ENCODE measurements at regions of chr1 and their contacts with region 1.

Region 1: GRCh38 chr1:180631766-180632325 is at the start of gene XPR1:
- DNase-seq: peak; percentile 99
- ATAC-seq: peak; percentile 94
- H3K4me3 ChIP-seq: peak within 1 kb of the TSS; percentile 66 to 97 (median 93)
- H3K4me3 Mint-ChIP-seq: peak within 1 kb of the TSS; percentile 49
- H3K27ac ChIP-seq: peak within 1 kb of the TSS; percentile 85 to 87
- H3K27ac Mint-ChIP-seq: no peak within 1 kb of the TSS
- H3K4me1 ChIP-seq: peaks cover 16 to 21% of the 10 kb centered on the region in 2 donors
- H3K4me1 Mint-ChIP-seq: peaks cover 19% of the 10 kb centered on the region
- H3K27me3 ChIP-seq: no peaks in the 10 kb centered on the region
- H3K27me3 Mint-ChIP-seq: peaks cover 5% of the 10 kb centered on the region
- CTCF ChIP-seq: no peak
- total RNA-seq, gene XPR1: 22.3 and 22.8 TPM in 2 replicates

Region 2: GRCh38 chr1:179293340-179294327 is 1338.2 kb before region 1 on chr1 and contains the start of gene SOAT1:
- CTCF ChIA-PET with region 1: no interaction called
- POLR2A ChIA-PET with region 1: no interaction called
- intact Hi-C with region 1: loop called (anchors 10 kb)
- DNase-seq: peak; percentile 93
- ATAC-seq: peak; percentile 99
- H3K4me3 ChIP-seq: peak within 1 kb of the TSS; percentile 89 to 99 (median 92)
- H3K4me3 Mint-ChIP-seq: peak within 1 kb of the TSS; percentile 93
- H3K27ac ChIP-seq: peak within 1 kb of the TSS; percentile 79 to 84
- H3K27ac Mint-ChIP-seq: peak within 1 kb of the TSS; percentile 82
- H3K4me1 ChIP-seq: peaks cover 27 to 39% of the 10 kb centered on the region in 2 donors
- H3K4me1 Mint-ChIP-seq: peaks cover 42% of the 10 kb centered on the region
- H3K27me3 ChIP-seq: no peaks in the 10 kb centered on the region
- H3K27me3 Mint-ChIP-seq: no peaks in the 10 kb centered on the region
- CTCF ChIP-seq: peak; percentile 31
- total RNA-seq, gene SOAT1: 25.1 and 27.1 TPM in 2 replicates

Region 3: GRCh38 chr1:180154325-180155181 is 477.3 kb before region 1 on chr1 and contains the start of gene QSOX1:
- CTCF ChIA-PET with region 1: no interaction called
- POLR2A ChIA-PET with region 1: no interaction called
- intact Hi-C with region 1: loop called (anchors 2 kb)
- DNase-seq: peak; percentile 91
- ATAC-seq: peak; percentile 96
- H3K4me3 ChIP-seq: peak within 1 kb of the TSS; percentile 58 to 89 (median 84)
- H3K4me3 Mint-ChIP-seq: peak within 1 kb of the TSS; percentile 96
- H3K27ac ChIP-seq: peak within 1 kb of the TSS; percentile 21 to 65
- H3K27ac Mint-ChIP-seq: peak within 1 kb of the TSS; percentile 86
- H3K4me1 ChIP-seq: peaks cover 22 to 25% of the 10 kb centered on the region in 2 donors
- H3K4me1 Mint-ChIP-seq: peaks cover 26% of the 10 kb centered on the region
- H3K27me3 ChIP-seq: no peaks in the 10 kb centered on the region
- H3K27me3 Mint-ChIP-seq: no peaks in the 10 kb centered on the region
- CTCF ChIP-seq: peak; percentile 9
- total RNA-seq, gene QSOX1: 16.9 and 20.6 TPM in 2 replicates

Region 4: GRCh38 chr1:180617774-180618395 is 14.0 kb before region 1 on chr1:
- CTCF ChIA-PET with region 1: no interaction called
- POLR2A ChIA-PET with region 1: no interaction called
- intact Hi-C with region 1: no loop called
- DNase-seq: no peak
- ATAC-seq: no peak
- H3K4me3 ChIP-seq: no peak overlapping the region
- H3K4me3 Mint-ChIP-seq: no peak overlapping the region
- H3K27ac ChIP-seq: no peak overlapping the region
- H3K27ac Mint-ChIP-seq: no peak overlapping the region
- H3K4me1 ChIP-seq: peaks cover 0 to 4% of the 10 kb centered on the region in 2 donors
- H3K4me1 Mint-ChIP-seq: no peaks in the 10 kb centered on the region
- H3K27me3 ChIP-seq: no peaks in the 10 kb centered on the region
- H3K27me3 Mint-ChIP-seq: no peaks in the 10 kb centered on the region
- CTCF ChIP-seq: no peak

Region 5: GRCh38 chr1:180851995-180852887 is 220.4 kb after region 1 on chr1:
- CTCF ChIA-PET with region 1: no interaction called
- POLR2A ChIA-PET with region 1: no interaction called
- intact Hi-C with region 1: loop called (anchors 10 kb)
- DNase-seq: peak; percentile 13
- ATAC-seq: peak; percentile 56
- H3K4me3 ChIP-seq: no peak overlapping the region
- H3K4me3 Mint-ChIP-seq: peak overlapping the region; percentile 6
- H3K27ac ChIP-seq: no peak overlapping the region
- H3K27ac Mint-ChIP-seq: no peak overlapping the region
- H3K4me1 ChIP-seq: peaks cover 9 to 10% of the 10 kb centered on the region in 2 donors
- H3K4me1 Mint-ChIP-seq: peaks cover 20% of the 10 kb centered on the region
- H3K27me3 ChIP-seq: no peaks in the 10 kb centered on the region
- H3K27me3 Mint-ChIP-seq: no peaks in the 10 kb centered on the region
- CTCF ChIP-seq: no peak

Region 6: DNA sequence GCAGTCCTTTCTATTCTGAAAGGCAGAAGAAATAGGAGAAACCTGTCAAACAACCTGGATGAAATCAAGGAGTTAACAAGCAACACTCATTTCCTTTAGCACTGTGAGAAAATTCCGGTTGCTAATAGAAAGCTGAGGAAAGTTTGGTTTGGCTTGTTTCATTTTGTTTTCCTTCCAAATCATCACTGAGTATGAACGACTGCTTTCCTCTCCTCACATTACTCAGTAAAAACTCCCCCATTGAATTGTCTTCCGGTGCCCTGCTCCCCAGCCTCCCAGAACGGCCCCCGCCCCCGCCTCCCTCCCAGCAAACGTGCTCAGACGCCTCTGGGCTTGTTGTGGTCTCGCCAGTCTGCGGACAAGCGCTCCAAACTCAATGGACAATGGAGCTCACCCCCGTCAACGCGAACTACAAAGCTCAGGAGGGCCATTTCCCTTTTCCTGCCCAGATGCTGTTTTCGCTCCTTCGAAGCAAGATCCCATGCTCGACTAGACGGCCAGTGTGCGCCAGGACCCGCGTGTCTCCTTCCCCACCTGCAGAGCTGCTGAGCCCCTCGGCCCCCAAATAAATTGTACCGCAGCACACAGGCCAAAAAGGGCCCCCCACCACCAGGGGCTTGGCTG is 390.1 kb after region 1 on chr1:
- CTCF ChIA-PET with region 1: no interaction called
- POLR2A ChIA-PET with region 1: no interaction called
- intact Hi-C with region 1: loop called (anchors 1 kb)
- DNase-seq: peak; percentile 71
- ATAC-seq: peak; percentile 4
- H3K4me3 ChIP-seq: peak overlapping the region; percentile 79 to 95 (median 88)
- H3K4me3 Mint-ChIP-seq: peak overlapping the region; percentile 93
- H3K27ac ChIP-seq: peak overlapping the region; percentile 54 to 82
- H3K27ac Mint-ChIP-seq: peak overlapping the region; percentile 98
- H3K4me1 ChIP-seq: peaks cover 24 to 29% of the 10 kb centered on the region in 2 donors
- H3K4me1 Mint-ChIP-seq: peaks cover 41% of the 10 kb centered on the region
- H3K27me3 ChIP-seq: no peaks in the 10 kb centered on the region
- H3K27me3 Mint-ChIP-seq: no peaks in the 10 kb centered on the region
- CTCF ChIP-seq: no peak

Region 7: DNA sequence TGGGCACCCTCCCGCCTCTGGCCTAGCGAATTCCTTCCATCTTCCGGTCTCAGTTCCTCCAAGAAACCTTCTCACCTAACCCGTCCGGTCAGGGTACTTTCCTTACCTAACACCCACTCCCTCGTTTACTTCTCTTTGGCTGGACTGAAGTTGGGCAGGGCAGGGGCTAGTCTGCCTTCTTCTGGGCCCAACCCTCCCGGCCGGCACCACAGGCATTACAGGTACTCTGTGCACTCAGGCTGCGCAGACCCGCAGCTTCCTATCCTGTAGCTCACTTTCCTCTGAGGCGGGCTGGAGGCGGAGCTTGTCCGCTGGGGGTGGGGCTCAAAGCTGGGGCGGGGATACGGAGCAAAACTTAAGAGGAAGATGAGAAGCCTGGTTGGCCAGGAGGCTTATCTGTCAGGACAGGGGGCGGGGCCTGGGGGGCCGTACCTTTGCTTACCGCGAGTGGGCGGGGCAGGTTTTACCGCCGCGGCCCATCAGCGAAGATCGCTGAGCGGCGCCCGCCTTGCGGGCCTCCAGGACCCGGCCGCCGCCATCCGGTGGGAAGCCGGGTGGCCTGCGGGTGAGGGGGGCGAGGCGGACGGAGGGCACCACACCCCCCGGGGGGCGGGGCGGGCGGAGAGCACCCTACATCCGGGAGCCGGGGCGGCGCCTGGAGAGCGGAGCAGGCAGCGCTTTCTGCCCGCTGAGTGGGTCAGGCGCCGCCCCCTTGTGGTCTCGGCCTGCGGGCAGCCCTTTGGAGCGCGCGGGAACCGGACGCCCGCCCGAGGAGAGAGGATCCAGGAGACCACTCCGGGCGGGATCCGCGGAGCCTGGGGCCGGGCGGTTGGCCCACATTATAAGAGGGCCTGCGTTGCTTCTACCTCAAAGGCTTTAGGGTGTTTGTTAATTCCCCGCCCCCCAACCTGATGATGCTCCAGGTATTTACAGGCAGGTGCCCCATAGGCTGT is 1397.8 kb after region 1 on chr1:
- CTCF ChIA-PET with region 1: no interaction called
- POLR2A ChIA-PET with region 1: no interaction called
- intact Hi-C with region 1: loop called (anchors 5 kb)
- DNase-seq: peak; percentile 98
- ATAC-seq: peak; percentile 92
- H3K4me3 ChIP-seq: peak overlapping the region; percentile 50 to 84 (median 72)
- H3K4me3 Mint-ChIP-seq: peak overlapping the region; percentile 92
- H3K27ac ChIP-seq: peak overlapping the region; percentile 60 to 71
- H3K27ac Mint-ChIP-seq: peak overlapping the region; percentile 94
- H3K4me1 ChIP-seq: peaks cover 9 to 12% of the 10 kb centered on the region in 2 donors
- H3K4me1 Mint-ChIP-seq: peaks cover 15% of the 10 kb centered on the region
- H3K27me3 ChIP-seq: no peaks in the 10 kb centered on the region
- H3K27me3 Mint-ChIP-seq: no peaks in the 10 kb centered on the region
- CTCF ChIP-seq: peak; percentile 41

Measured in B cell (primary cell).